HEK293 (cell line): ENCODE measurements at regions of chrX and their contacts with region 1.

Region 1: GRCh38 chrX:17590892-17591740 is 146.2 kb upstream of the SCML1 start:
- H3K4me3 ChIP-seq: no peak overlapping the region
- H3K27ac ChIP-seq: no peak overlapping the region
- H3K4me1 ChIP-seq: 0 out of 2 replicates have a peak, but pooled peaks cover 2% of the 10 kb centered on the region
- CTCF ChIP-seq: no peak; the same call in 1 of the 2 replicates

Region 2: DNA sequence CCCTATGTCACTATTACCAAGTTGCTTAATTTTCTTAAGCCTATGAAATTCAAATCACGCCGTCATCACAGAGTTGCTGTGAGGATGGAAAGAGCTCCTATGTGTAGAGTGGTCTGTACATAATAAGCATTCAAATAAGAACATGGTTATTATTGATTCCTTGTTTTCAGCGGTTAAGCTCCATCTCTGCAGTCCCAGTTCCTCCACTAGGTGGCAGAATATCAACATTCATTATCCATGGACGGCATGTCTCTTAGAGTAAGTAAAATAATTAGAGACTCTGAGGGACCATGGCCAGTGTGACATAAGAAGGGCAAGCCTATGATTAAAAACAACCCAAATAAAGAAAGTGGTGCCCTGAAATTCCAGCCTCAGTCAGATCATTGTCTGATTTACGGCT is 348.6 kb before region 1 on chrX:
- CTCF ChIA-PET with region 1: interaction called, 36 read pairs
- POLR2A ChIA-PET with region 1: no interaction called
- H3K4me3 ChIP-seq: no peak overlapping the region
- H3K27ac ChIP-seq: no peak overlapping the region
- H3K4me1 ChIP-seq: no peaks in the 10 kb centered on the region
- CTCF ChIP-seq: 0 out of 2 replicates have a peak, but pooled peaks have one; percentile 10

Region 3: DNA sequence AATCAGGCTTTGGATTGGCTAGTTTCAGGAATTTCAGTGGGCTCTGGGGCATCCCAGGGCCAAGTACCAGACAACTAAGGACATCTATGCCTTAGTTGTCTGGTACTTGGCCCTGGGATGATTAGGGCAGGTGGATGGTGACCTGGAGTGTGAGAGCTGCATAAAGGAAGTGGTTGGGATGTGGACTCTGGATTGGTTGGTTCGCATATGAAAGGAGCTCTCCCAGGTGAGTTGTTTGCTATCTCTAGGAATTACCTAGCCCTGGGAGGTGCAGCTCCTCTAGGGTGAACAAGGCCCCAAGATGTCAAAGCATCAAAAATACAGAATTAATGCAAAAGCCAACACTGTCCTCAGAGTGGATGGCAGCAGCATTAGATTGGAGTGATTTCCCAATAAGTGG is 106.5 kb before region 1 on chrX:
- CTCF ChIA-PET with region 1: no interaction called
- POLR2A ChIA-PET with region 1: no interaction called
- H3K4me3 ChIP-seq: no peak overlapping the region
- H3K27ac ChIP-seq: no peak overlapping the region
- H3K4me1 ChIP-seq: no peaks in the 10 kb centered on the region
- CTCF ChIP-seq: no peak

Region 4: GRCh38 chrX:17511556-17511955 is 79.6 kb before region 1 on chrX:
- CTCF ChIA-PET with region 1: no interaction called
- POLR2A ChIA-PET with region 1: no interaction called
- H3K4me3 ChIP-seq: no peak overlapping the region
- H3K27ac ChIP-seq: no peak overlapping the region
- H3K4me1 ChIP-seq: no peaks in the 10 kb centered on the region
- CTCF ChIP-seq: no peak

Region 5: DNA sequence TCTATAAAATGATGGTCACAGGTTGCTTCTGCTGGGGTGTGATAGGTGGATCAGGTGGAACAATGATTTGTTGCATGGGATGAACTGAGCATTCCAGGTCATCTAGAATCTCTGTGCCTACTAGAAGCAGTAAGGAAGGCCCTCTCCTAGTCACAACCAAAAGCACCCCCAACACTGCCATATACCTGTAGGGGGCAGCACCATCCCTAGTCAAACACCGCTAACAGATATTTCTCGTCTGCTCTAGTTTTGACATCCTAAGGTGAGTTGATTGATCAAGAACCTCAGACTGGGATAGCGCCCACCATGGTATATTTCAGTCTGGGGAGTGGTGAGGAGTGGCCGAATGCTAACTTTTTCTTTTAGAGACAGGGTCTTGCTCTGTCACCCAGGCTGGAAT is 55.9 kb before region 1 on chrX:
- CTCF ChIA-PET with region 1: interaction called, 22 read pairs
- POLR2A ChIA-PET with region 1: no interaction called
- H3K4me3 ChIP-seq: no peak overlapping the region
- H3K27ac ChIP-seq: no peak overlapping the region
- H3K4me1 ChIP-seq: no peaks in the 10 kb centered on the region
- CTCF ChIP-seq: no peak